CD8-positive, alpha-beta T cell (primary cell): ENCODE measurements at regions of chr14 and their contacts with region 1.

Region 1: DNA sequence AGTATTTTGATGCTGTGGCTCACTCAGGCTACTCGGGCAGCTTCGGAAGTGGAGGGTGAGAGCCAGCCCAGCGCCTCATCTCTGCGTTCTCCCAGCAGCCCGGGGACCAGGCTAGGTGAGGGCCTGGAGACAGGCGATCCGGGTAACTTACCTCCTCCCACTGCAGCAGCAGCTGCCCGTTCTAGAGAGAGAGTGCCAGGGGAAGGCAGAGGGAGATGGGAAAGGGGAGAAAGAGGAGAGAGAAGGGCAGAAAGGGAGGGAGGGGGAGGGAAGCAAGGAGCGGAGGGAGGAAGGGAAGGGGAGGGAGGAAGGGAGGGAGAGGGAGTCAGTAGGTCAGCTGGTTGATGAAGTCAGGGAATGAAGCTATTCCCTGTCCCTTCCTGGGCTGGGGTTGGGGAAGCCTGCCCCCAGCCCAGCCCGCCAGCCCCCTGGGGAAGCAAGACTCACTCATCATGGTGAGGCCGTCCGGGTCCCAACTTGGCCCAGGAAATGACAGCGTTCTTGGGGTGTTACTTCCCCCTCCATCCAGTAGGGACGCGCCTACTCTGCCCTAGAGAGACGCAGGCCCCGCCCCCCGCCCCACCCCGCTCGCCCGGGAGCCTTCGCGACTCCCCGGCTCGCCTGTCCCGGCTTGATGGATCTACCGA is at the start of gene IFI27L2:
- DNase-seq: peak; percentile 26 to 87 (median 65)
- ATAC-seq: peak; percentile 95
- H3K4me3 ChIP-seq: peak within 1 kb of the TSS; percentile 57 to 71
- H3K4me3 Mint-ChIP-seq: peak within 1 kb of the TSS; percentile 92
- H3K27ac ChIP-seq: peak within 1 kb of the TSS in 1 of 2 experiments; percentile 64
- H3K27ac Mint-ChIP-seq: peak within 1 kb of the TSS; percentile 83
- H3K4me1 ChIP-seq: peaks cover 16% of the 10 kb centered on the region
- H3K4me1 Mint-ChIP-seq: peaks cover 17% of the 10 kb centered on the region
- H3K27me3 ChIP-seq: no peaks in the 10 kb centered on the region
- H3K27me3 Mint-ChIP-seq: no peaks in the 10 kb centered on the region
- CTCF ChIP-seq: no peak
- total RNA-seq, gene IFI27L2: 13.3 to 16.4 TPM

Region 2: DNA sequence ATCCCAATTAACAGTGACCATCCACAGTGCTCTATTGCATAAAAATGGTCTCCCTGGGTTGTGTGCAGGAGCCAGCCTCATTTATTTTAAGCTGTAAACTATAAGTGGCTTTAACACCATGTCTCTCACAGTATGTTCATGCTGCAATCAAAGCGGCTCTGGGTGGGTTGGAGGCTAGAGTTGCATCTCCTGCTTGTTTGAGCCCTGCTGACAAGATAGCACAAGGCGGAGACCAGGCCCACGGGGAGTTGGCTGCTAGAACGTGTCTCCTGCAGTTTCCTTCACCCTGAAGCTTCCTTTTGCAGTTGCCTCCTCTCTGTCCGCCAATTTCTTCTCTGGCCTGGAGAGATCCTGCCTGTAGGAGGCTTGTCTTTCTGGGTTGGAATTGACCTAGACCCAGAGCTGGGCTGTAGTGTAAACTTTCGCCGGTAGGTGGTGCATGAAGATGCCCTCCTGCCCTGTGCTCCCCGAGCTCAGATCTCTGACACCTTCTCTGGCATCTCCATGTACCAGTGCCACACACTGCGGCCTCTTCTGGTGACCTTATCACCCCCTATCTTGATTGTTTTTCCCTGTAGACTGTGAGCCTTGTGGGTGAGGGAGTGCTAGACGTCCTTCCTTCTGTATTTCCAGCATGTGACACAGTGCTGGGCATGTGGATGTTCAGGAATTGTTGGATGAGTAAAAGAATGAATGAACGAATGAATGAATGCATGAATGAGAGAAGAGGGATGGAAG is 92.8 kb before region 1 on chr14:
- CTCF ChIA-PET with region 1: interaction called, 184 read pairs
- POLR2A ChIA-PET with region 1: no interaction called
- intact Hi-C with region 1: no loop called
- DNase-seq: peak; percentile 52 to 84 (median 78)
- ATAC-seq: peak; percentile 99
- H3K4me3 ChIP-seq: no peak overlapping the region
- H3K4me3 Mint-ChIP-seq: no peak overlapping the region
- H3K27ac ChIP-seq: no peak overlapping the region
- H3K27ac Mint-ChIP-seq: no peak overlapping the region
- H3K4me1 ChIP-seq: no peaks in the 10 kb centered on the region
- H3K4me1 Mint-ChIP-seq: peaks cover 3% of the 10 kb centered on the region
- H3K27me3 ChIP-seq: no peaks in the 10 kb centered on the region
- H3K27me3 Mint-ChIP-seq: no peaks in the 10 kb centered on the region
- CTCF ChIP-seq: peak; percentile 82

Region 3: DNA sequence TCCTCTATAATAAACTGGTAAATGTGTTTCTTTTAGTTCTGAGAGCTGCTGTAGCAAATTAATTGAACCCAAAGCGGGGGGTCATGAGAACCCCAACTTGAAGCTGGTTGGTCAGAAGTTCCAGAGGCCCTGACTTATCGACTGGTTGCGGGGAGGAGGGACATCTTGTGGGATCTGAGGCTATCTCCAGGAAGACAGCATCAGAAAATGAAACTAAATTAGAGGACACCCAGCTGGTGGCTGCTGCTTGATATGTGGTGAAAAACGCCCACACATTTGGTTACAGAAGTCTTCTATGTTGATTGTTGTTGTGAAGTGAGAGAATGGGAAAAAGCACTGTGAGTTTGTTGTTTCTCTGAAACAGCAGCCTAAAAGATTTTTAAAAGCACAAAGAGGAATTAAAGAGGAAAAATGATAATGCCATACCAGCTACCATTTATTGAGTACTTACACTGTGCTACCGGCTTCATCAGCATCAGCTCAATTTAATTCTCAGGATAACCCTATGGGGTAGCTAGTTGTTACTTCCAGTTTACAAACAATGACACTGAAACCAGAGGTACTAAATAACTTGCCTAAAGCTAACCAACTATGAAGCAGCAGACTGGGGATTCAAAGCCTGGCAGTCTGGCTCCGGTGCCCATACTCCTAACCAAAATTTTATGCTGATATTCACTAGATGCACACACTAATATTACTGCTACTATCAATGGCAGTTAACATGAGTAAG is 72.5 kb before region 1 on chr14:
- CTCF ChIA-PET with region 1: interaction called, 12 read pairs
- POLR2A ChIA-PET with region 1: interaction called, 3 read pairs
- intact Hi-C with region 1: loop called in 1 of 2 experiments (anchors 2 kb)
- DNase-seq: peak in 4 of 9 experiments; percentile 17 to 67 (median 38)
- ATAC-seq: peak; percentile 50
- H3K4me3 ChIP-seq: no peak overlapping the region
- H3K4me3 Mint-ChIP-seq: peak overlapping the region; percentile 8
- H3K27ac ChIP-seq: peak overlapping the region in 1 of 2 experiments; percentile 51
- H3K27ac Mint-ChIP-seq: peak overlapping the region; percentile 72
- H3K4me1 ChIP-seq: peaks cover 31% of the 10 kb centered on the region
- H3K4me1 Mint-ChIP-seq: peaks cover 66% of the 10 kb centered on the region
- H3K27me3 ChIP-seq: no peaks in the 10 kb centered on the region
- H3K27me3 Mint-ChIP-seq: no peaks in the 10 kb centered on the region
- CTCF ChIP-seq: no peak

Region 4: DNA sequence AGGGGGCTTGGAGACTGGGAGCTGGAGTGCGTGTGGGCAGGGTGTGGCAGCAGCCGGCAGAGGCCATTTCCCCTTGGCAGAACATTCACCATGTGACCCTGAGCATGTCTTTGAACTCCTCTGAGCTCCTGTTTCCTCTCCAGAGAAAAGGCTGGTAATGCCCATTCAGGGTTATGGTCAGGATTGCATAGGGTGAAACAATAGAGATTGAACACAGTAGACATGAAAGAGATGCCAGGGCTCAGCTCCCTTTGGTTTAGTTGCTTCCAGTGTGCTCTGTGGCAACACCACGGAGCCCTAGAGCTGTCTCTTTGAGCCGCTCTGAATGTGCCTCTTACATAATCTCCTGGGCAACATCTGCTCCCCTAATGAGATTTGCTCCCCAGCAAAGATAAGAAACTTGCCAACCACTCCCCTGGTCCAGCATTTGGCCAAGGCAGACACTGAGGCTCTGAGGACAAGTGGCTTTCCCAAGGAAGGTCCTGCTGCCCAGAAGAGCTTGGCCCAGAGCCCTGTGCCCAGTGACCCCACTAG is 14.1 kb before region 1 on chr14:
- CTCF ChIA-PET with region 1: interaction called, 10 read pairs
- POLR2A ChIA-PET with region 1: interaction called, 3 read pairs
- intact Hi-C with region 1: no loop called
- DNase-seq: no peak
- ATAC-seq: no peak
- H3K4me3 ChIP-seq: no peak overlapping the region
- H3K4me3 Mint-ChIP-seq: no peak overlapping the region
- H3K27ac ChIP-seq: no peak overlapping the region
- H3K27ac Mint-ChIP-seq: no peak overlapping the region
- H3K4me1 ChIP-seq: no peaks in the 10 kb centered on the region
- H3K4me1 Mint-ChIP-seq: no peaks in the 10 kb centered on the region
- H3K27me3 ChIP-seq: no peaks in the 10 kb centered on the region
- H3K27me3 Mint-ChIP-seq: peaks cover 33% of the 10 kb centered on the region
- CTCF ChIP-seq: no peak

Region 5: DNA sequence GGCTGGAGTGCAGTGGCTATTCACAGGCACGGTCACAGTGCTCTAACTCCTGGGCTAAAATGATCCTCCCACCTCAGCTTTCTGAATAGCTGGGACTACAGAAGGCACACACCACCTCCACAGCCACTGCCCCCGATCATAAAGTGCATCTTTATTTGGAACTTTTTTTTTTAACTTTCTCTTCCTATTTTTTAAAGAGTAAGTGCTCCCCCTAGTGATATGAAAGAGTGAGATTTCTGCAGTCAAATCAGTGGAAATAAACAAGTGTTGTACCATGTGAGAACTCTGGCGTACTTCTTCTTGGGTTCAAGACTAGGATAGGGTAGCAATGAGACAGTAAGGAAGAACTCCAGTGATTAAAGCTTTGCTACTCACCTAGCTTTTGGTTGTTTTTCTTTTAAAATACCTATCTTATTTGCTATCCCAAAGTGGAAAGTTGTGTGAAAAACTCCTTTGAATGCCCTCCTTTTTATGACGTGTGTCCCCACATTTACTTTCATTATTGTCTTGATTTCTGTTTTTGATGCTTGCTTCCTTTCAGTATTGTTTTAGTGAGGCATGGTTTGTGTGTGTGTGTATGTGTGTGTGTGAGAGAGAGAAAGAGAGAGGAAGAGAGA is 51.5 kb after region 1 on chr14:
- CTCF ChIA-PET with region 1: interaction called, 48 read pairs
- POLR2A ChIA-PET with region 1: no interaction called
- intact Hi-C with region 1: loop called (anchors 1 to 2 kb)
- DNase-seq: peak in 3 of 9 experiments; percentile 32 to 76 (median 68)
- ATAC-seq: peak; percentile 86
- H3K4me3 ChIP-seq: no peak overlapping the region
- H3K4me3 Mint-ChIP-seq: peak overlapping the region; percentile 49
- H3K27ac ChIP-seq: no peak overlapping the region
- H3K27ac Mint-ChIP-seq: peak overlapping the region; percentile 63
- H3K4me1 ChIP-seq: no peaks in the 10 kb centered on the region
- H3K4me1 Mint-ChIP-seq: peaks cover 9% of the 10 kb centered on the region
- H3K27me3 ChIP-seq: peaks cover 0 to 2% of the 10 kb centered on the region in 2 experiments
- H3K27me3 Mint-ChIP-seq: peaks cover 15% of the 10 kb centered on the region
- CTCF ChIP-seq: peak; percentile 81

Region 6: GRCh38 chr14:94548999-94549985 is 420.1 kb after region 1 on chr14:
- CTCF ChIA-PET with region 1: no interaction called
- POLR2A ChIA-PET with region 1: no interaction called
- intact Hi-C with region 1: loop called (anchors 5 to 10 kb)
- DNase-seq: peak in 8 of 9 experiments; percentile 7 to 60 (median 44)
- ATAC-seq: no peak
- H3K4me3 ChIP-seq: no peak overlapping the region
- H3K4me3 Mint-ChIP-seq: no peak overlapping the region
- H3K27ac ChIP-seq: no peak overlapping the region
- H3K27ac Mint-ChIP-seq: no peak overlapping the region
- H3K4me1 ChIP-seq: no peaks in the 10 kb centered on the region
- H3K4me1 Mint-ChIP-seq: no peaks in the 10 kb centered on the region
- H3K27me3 ChIP-seq: no peaks in the 10 kb centered on the region
- H3K27me3 Mint-ChIP-seq: peaks cover 22% of the 10 kb centered on the region
- CTCF ChIP-seq: peak; percentile 60